ENCODE measurements at regions of chr3 and their contacts with region 1.

Region 1: DNA sequence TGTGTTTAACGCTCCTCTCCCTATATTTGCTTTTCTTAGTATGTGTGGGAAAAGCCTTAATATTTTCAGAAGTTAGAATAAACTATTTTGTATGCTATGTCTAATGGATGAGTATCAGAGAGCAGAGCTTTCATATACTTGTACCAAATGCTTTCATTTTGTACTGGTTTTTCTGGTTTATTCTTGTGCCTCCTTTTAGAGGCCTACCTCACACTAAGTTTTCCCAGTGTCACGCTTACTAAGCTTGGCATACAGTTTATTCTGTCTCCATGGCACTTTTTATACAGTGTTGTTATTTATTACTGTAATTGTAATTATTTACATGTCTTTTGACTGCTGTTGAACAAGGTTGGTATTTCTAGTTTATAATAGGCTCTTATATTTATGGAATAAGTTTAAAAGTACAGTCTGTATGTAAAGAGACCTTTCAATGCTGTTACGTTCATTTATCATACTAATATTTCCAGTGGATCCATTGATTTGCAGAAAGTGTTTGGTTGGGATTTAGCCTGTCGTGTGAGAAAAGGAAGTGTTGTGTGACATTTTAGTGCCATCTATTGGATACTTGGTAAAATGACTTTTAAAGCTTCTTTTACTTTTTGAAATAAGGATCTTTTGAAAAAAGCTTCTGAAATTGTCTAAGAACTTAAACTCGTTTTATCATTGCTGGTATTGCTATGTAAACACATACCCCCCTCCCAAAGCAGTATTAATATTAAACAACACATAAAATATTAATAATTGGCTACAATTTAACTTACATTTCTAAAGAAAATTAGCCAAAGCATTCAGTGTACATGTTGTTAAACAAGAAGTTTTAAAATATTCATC is 5.2 kb upstream of the EBLN2 start:
- DNase-seq: no peak
- ATAC-seq: peak; percentile 49
- H3K4me3 ChIP-seq: no peak overlapping the region
- H3K27ac ChIP-seq: no peak overlapping the region
- H3K4me1 ChIP-seq: no peaks in the 10 kb centered on the region
- H3K27me3 ChIP-seq: no peaks in the 10 kb centered on the region
- CTCF ChIP-seq: peak; percentile 34 to 57 (median 35); a peak in 3 of 6 replicates
- EP300 ChIP-seq: no peak
- POLR2A ChIP-seq: no peak
- RAD21 ChIP-seq: peak; percentile 75

Region 2: GRCh38 chr3:71859123-71859519 is 1197.1 kb before region 1 on chr3:
- CTCF ChIA-PET with region 1: no interaction called
- POLR2A ChIA-PET with region 1: no interaction called
- RAD21 ChIA-PET with region 1: no interaction called
- SMC1A ChIA-PET with region 1: no interaction called
- in situ Hi-C with region 1: no loop called
- intact Hi-C with region 1: no loop called
- DNase-seq: no peak
- ATAC-seq: peak; percentile 71
- H3K4me3 ChIP-seq: no peak overlapping the region
- H3K27ac ChIP-seq: no peak overlapping the region
- H3K4me1 ChIP-seq: no peaks in the 10 kb centered on the region
- H3K27me3 ChIP-seq: peaks cover 2 to 3% of the 10 kb centered on the region in 2 experiments; a peak in 2 of 4 replicates
- CTCF ChIP-seq: peak; percentile 34 to 42 (median 38); a peak in 5 of 6 replicates
- EP300 ChIP-seq: no peak
- POLR2A ChIP-seq: no peak
- RAD21 ChIP-seq: peak; percentile 52

Region 3: DNA sequence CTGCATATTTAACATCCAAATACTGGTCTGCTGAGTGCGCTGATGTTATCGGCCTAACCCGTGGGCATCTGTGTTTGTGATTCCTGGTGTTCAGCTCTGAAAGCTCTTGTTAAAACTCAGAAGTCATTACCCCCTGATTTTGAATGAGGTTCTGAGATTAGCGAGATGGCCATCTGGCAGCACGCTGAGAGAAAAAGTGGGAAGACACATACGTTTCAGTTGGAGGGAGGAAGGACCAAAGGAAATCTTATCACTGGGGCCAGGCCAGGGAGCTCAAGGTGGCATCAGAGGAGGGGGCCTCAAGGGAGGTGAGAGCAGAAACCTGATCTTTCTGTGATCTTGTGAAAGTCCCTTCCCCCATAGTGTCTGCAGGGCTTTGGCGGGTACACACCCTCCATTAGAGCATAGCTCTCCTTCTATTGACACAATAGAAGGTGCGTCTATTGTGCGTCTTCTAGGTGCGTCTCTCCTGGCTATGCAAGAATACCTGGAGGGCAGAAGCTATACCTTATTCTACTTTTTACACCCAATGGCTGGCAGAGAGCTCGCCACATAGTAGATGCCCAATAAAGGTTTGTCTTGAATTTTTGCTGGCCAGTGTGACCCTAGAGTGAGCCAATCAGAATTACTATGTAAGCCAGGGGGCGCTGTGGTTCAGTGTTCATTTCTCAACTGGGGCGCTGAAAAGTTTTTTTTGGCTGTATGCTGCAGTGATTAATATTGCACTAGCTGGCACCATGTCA is 390.4 kb before region 1 on chr3:
- CTCF ChIA-PET with region 1: interaction called, 19 read pairs
- POLR2A ChIA-PET with region 1: no interaction called
- RAD21 ChIA-PET with region 1: interaction called, 5 read pairs
- SMC1A ChIA-PET with region 1: interaction called, 3 read pairs
- in situ Hi-C with region 1: no loop called
- intact Hi-C with region 1: no loop called
- DNase-seq: no peak
- ATAC-seq: peak; percentile 89
- H3K4me3 ChIP-seq: no peak overlapping the region
- H3K27ac ChIP-seq: no peak overlapping the region
- H3K4me1 ChIP-seq: no peaks in the 10 kb centered on the region
- H3K27me3 ChIP-seq: no peaks in the 10 kb centered on the region
- CTCF ChIP-seq: peak; percentile 56 to 68 (median 57); a peak in 5 of 6 replicates
- EP300 ChIP-seq: no peak
- POLR2A ChIP-seq: no peak
- RAD21 ChIP-seq: peak; percentile 84

Region 4: DNA sequence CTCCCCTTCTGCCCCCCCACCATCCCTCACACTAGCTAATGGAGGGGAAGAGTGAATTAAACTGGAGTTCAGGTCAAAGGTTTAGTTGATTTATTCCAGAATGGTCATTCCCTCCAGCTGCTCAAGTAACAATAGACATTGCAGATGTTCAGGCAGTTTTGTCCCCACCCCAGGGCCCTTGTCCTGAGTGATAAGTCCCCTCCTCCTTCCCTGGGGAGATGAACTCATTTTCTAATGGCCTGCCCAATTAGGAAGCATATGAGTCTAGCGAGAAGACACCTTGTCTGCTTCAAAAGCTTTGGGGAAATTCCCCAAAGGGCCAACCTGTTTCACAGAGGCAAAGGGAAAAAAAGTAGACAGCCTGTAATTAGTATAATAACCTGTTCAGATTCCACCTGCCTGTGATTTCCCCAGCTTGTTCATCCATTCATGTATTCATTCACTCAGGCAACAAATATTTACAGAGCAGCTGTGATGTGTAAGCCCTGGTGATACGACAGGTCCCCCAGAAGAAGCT is 373.2 kb before region 1 on chr3:
- CTCF ChIA-PET with region 1: no interaction called
- POLR2A ChIA-PET with region 1: no interaction called
- RAD21 ChIA-PET with region 1: no interaction called
- SMC1A ChIA-PET with region 1: no interaction called
- in situ Hi-C with region 1: no loop called
- intact Hi-C with region 1: no loop called
- DNase-seq: peak; percentile 57
- ATAC-seq: peak; percentile 79
- H3K4me3 ChIP-seq: no peak overlapping the region
- H3K27ac ChIP-seq: no peak overlapping the region
- H3K4me1 ChIP-seq: peaks cover 42% of the 10 kb centered on the region
- H3K27me3 ChIP-seq: no peaks in the 10 kb centered on the region
- CTCF ChIP-seq: no peak
- EP300 ChIP-seq: no peak
- POLR2A ChIP-seq: no peak
- RAD21 ChIP-seq: no peak

Region 5: GRCh38 chr3:72938471-72939265 is 117.6 kb before region 1 on chr3:
- CTCF ChIA-PET with region 1: interaction called, 110 read pairs
- POLR2A ChIA-PET with region 1: no interaction called
- RAD21 ChIA-PET with region 1: interaction called, 51 read pairs
- SMC1A ChIA-PET with region 1: interaction called, 67 read pairs
- in situ Hi-C with region 1: loop called (anchors 5 kb)
- intact Hi-C with region 1: loop called (anchors 1 kb)
- DNase-seq: no peak
- ATAC-seq: peak; percentile 98
- H3K4me3 ChIP-seq: no peak overlapping the region
- H3K27ac ChIP-seq: no peak overlapping the region
- H3K4me1 ChIP-seq: no peaks in the 10 kb centered on the region
- H3K27me3 ChIP-seq: no peaks in the 10 kb centered on the region
- CTCF ChIP-seq: peak; percentile 39 to 51 (median 41); a peak in 4 of 6 replicates
- EP300 ChIP-seq: no peak
- POLR2A ChIP-seq: no peak
- RAD21 ChIP-seq: peak; percentile 67

Region 6: GRCh38 chr3:72960812-72961518 is 95.3 kb before region 1 on chr3:
- CTCF ChIA-PET with region 1: interaction called, 13 read pairs
- POLR2A ChIA-PET with region 1: no interaction called
- RAD21 ChIA-PET with region 1: interaction called, 6 read pairs
- SMC1A ChIA-PET with region 1: interaction called, 15 read pairs
- in situ Hi-C with region 1: no loop called
- intact Hi-C with region 1: no loop called
- DNase-seq: no peak
- ATAC-seq: peak; percentile 18; the same call in 2 of the 3 replicates
- H3K4me3 ChIP-seq: no peak overlapping the region
- H3K27ac ChIP-seq: no peak overlapping the region
- H3K4me1 ChIP-seq: peaks cover 5% of the 10 kb centered on the region
- H3K27me3 ChIP-seq: no peaks in the 10 kb centered on the region
- CTCF ChIP-seq: no peak
- EP300 ChIP-seq: no peak
- POLR2A ChIP-seq: no peak
- RAD21 ChIP-seq: no peak

Region 7: GRCh38 chr3:73024836-73025235 is 31.4 kb before region 1 on chr3:
- CTCF ChIA-PET with region 1: interaction called, 15 read pairs
- POLR2A ChIA-PET with region 1: no interaction called
- RAD21 ChIA-PET with region 1: interaction called, 6 read pairs
- SMC1A ChIA-PET with region 1: interaction called, 4 read pairs
- in situ Hi-C with region 1: no loop called
- intact Hi-C with region 1: no loop called
- DNase-seq: no peak
- ATAC-seq: peak; percentile 35
- H3K4me3 ChIP-seq: no peak overlapping the region
- H3K27ac ChIP-seq: no peak overlapping the region
- H3K4me1 ChIP-seq: peaks cover 10% of the 10 kb centered on the region
- H3K27me3 ChIP-seq: no peaks in the 10 kb centered on the region
- CTCF ChIP-seq: no peak
- EP300 ChIP-seq: no peak
- POLR2A ChIP-seq: no peak
- RAD21 ChIP-seq: no peak

Region 8: DNA sequence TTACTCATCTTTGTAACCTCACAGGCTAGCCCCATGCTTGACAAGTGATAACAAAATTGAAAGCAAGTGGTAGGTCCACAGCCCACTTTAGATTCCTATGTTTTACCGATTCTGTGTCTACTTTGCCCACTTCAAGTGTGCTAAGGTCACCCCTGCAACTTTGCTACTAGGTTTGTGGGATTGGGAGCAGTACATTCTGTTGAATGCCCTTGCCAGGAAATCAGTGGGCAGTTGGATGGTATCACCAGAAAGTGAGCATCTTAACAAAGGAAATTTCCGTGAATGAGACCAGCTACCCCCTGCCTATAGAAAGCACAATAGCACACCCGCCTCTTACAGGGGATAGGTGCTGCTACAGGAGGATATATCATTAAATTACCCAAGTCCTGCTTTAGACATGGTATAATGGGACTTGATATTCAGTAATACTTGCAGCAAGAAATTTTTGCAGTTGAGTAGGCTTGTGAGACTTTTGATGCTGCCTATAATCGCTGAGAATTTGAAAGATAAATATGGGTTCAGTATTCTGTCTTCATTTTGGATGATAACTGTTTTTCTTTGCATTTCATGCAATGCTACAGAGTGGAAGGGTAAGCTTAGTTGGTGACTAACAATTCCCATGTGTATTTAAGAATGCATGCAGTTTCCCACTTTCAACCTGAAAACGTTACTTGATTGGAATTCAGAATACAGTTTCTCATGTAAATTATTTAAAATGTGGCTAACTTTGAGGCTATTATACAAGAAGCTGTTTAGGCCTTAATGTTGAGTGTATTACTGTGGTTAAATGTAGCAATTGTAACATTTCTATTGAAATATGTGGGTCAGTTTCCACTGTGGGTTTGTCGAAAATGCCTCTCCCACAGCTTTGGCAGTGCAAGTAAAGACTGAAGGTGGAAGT is 14.7 kb after region 1 on chr3:
- CTCF ChIA-PET with region 1: interaction called, 16 read pairs
- POLR2A ChIA-PET with region 1: no interaction called
- RAD21 ChIA-PET with region 1: interaction called, 4 read pairs
- SMC1A ChIA-PET with region 1: interaction called, 19 read pairs
- in situ Hi-C with region 1: no loop called
- intact Hi-C with region 1: no loop called
- DNase-seq: no peak
- ATAC-seq: no peak
- H3K4me3 ChIP-seq: no peak overlapping the region
- H3K27ac ChIP-seq: no peak overlapping the region
- H3K4me1 ChIP-seq: no peaks in the 10 kb centered on the region
- H3K27me3 ChIP-seq: no peaks in the 10 kb centered on the region
- CTCF ChIP-seq: no peak
- EP300 ChIP-seq: no peak
- POLR2A ChIP-seq: no peak
- RAD21 ChIP-seq: no peak

Region 9: DNA sequence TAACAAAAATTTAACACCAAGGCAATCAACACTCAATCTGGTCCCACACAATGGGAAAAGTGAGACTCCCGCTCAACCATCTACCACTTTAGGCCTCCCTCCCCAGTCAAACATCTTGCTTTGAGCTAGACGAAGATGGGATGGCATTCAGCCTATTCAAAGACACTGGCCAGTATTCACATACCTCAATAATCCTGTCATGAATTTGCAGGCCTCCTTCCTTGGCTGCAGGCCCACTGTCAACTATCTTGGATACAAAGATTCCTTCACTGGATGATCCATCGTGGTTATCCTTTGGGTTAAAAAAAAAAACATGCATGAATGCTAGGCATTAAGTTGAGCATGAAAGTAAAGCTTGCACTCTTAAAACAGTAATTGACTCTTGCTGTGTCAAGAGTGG is 545.9 kb after region 1 on chr3:
- CTCF ChIA-PET with region 1: no interaction called
- POLR2A ChIA-PET with region 1: no interaction called
- RAD21 ChIA-PET with region 1: no interaction called
- SMC1A ChIA-PET with region 1: no interaction called
- in situ Hi-C with region 1: no loop called
- intact Hi-C with region 1: no loop called
- DNase-seq: no peak
- ATAC-seq: no peak
- H3K4me3 ChIP-seq: no peak overlapping the region
- H3K27ac ChIP-seq: no peak overlapping the region
- H3K4me1 ChIP-seq: no peaks in the 10 kb centered on the region
- H3K27me3 ChIP-seq: no peaks in the 10 kb centered on the region; a peak in 1 of 4 replicates
- CTCF ChIP-seq: no peak
- EP300 ChIP-seq: no peak
- POLR2A ChIP-seq: no peak
- RAD21 ChIP-seq: no peak

Measured in GM12878 (cell line).